ENCODE measurements at regions of chr12 and their contacts with region 1.

Region 1: GRCh38 chr12:57899010-57899662 is 42.2 kb upstream of the ATP23 start:
- DNase-seq: peak; percentile 59
- H3K4me3 ChIP-seq: no peak overlapping the region
- H3K27ac ChIP-seq: no peak overlapping the region
- H3K4me1 ChIP-seq: peaks cover 28% of the 10 kb centered on the region
- H3K27me3 ChIP-seq: no peaks in the 10 kb centered on the region
- CTCF ChIP-seq: no peak
- POLR2A ChIP-seq: no peak

Region 2: DNA sequence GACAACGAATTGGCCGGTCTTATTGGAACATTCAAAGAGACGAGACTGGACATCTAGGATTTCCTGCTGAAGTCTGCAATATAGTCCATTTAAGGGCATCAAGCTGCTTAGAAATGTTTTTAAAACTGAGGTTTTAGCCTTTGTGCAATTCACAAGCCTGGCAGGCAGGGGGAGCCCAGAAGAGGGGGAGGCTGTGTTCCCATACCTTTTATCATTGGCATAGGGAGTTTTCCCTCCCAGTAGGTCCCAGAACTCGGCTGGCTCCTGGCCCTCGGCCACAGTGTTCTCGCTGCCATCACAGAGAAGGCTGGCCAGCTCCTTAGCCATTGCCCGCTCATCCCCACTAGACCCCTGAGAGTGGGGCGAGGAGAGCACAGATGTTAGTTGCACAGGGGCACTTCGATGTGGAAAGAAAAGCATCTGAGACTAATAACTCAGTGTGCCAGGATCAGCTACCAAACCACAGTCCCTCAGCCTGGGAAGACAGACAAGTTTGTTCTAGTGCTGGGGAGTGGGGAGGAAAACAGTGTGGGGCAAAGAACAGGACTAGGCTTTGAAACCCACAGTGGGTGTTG is 95.7 kb before region 1 on chr12:
- CTCF ChIA-PET with region 1: interaction called, 44 read pairs
- POLR2A ChIA-PET with region 1: interaction called, 3 read pairs
- dilution Hi-C with region 1: no loop called
- intact Hi-C with region 1: no loop called
- DNase-seq: peak; percentile 60
- H3K4me3 ChIP-seq: no peak overlapping the region
- H3K27ac ChIP-seq: no peak overlapping the region
- H3K4me1 ChIP-seq: no peaks in the 10 kb centered on the region
- H3K27me3 ChIP-seq: no peaks in the 10 kb centered on the region
- CTCF ChIP-seq: peak; percentile 81 to 83
- POLR2A ChIP-seq: no peak

Region 3: GRCh38 chr12:57865090-57865751 is 33.9 kb before region 1 on chr12:
- CTCF ChIA-PET with region 1: interaction called, 63 read pairs
- POLR2A ChIA-PET with region 1: interaction called, 6 read pairs
- dilution Hi-C with region 1: no loop called
- intact Hi-C with region 1: loop called (anchors 2 kb)
- DNase-seq: peak; percentile 81
- H3K4me3 ChIP-seq: peak overlapping the region; percentile 19 to 51 (median 38)
- H3K27ac ChIP-seq: peak overlapping the region; percentile 82
- H3K4me1 ChIP-seq: peaks cover 8% of the 10 kb centered on the region
- H3K27me3 ChIP-seq: no peaks in the 10 kb centered on the region
- CTCF ChIP-seq: no peak
- POLR2A ChIP-seq: peak; percentile 75

Region 4: DNA sequence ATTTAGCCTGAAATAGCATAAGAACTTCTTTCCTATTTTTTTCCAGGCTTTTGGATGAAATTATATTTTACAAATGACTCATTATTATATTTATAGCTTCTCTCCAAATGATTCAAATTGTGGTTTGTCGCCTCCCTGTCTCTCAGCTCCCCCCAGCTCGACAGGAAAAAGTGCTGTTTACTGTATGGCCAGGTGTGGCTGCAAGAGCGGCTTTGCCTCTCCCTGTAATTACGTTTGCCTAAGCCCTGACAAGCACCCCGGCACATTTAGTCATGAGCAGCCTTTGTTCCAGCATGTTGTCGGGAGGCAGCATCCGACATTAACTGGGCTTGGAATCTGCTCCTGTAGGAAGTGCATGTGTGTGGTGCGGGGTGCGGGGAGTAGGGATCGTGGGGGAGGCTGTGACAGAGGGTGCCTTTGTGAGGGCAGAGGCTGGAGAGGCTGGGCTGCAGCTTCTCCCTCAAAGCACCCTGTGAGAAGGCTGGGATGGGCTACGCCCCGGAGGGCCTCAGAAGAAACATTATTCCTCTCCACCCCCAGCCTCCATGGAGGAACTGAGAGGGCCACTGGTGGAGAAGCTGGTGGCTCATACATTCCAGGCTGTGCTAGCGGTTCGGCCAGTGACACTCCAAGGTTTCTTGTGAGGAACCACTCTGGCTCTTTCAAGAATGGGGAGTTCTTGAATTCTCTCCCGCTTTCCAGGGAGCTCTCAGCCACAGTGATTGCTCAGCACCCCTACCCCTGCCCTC is 10.6 kb before region 1 on chr12:
- CTCF ChIA-PET with region 1: interaction called, 15 read pairs
- POLR2A ChIA-PET with region 1: interaction called, 3 read pairs
- dilution Hi-C with region 1: no loop called
- intact Hi-C with region 1: no loop called
- DNase-seq: peak; percentile 56
- H3K4me3 ChIP-seq: no peak overlapping the region
- H3K27ac ChIP-seq: no peak overlapping the region
- H3K4me1 ChIP-seq: peaks cover 17% of the 10 kb centered on the region
- H3K27me3 ChIP-seq: no peaks in the 10 kb centered on the region
- CTCF ChIP-seq: no peak
- POLR2A ChIP-seq: no peak

Region 5: DNA sequence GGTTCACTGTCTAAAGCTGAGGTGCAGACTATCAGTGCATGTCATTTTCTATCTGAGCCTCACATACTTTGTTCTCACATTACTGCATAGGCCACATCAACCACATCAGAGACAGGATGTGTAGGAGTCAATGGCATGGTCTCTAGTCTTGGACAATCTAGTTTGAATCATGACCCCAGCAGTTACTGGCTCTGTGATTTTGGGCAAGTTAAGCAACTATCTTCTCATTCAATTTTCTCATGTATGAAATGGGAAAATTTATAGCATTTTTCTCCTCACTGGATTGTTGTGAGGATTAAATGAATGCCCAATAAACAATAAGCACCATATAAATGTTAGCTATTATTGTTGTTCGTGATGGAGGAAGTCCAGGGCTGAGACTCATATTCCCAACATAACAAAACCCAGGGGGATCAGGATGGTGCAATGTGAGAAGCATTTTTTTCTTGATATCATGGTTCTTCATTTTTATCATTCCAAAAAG is 588.6 kb after region 1 on chr12:
- CTCF ChIA-PET with region 1: no interaction called
- POLR2A ChIA-PET with region 1: no interaction called
- dilution Hi-C with region 1: no loop called
- intact Hi-C with region 1: no loop called
- DNase-seq: no peak
- H3K4me3 ChIP-seq: no peak overlapping the region
- H3K27ac ChIP-seq: no peak overlapping the region
- H3K4me1 ChIP-seq: peaks cover 7% of the 10 kb centered on the region
- H3K27me3 ChIP-seq: no peaks in the 10 kb centered on the region
- CTCF ChIP-seq: no peak
- POLR2A ChIP-seq: no peak